Aorta (tissue), 5 donors: ENCODE measurements at regions of chr21 and their contacts with region 1.

Region 1: GRCh38 chr21:14382835-14383594 is at the start of gene HSPA13:
- DNase-seq: peak; percentile 100
- ATAC-seq: peak; percentile 100
- H3K4me3 ChIP-seq: peak within 1 kb of the TSS; percentile 69 to 71
- H3K27ac ChIP-seq: peak within 1 kb of the TSS; percentile 36 to 89
- H3K4me1 ChIP-seq: peaks cover 0 to 2% of the 10 kb centered on the region in 2 donors
- H3K27me3 ChIP-seq: no peaks in the 10 kb centered on the region
- total RNA-seq, gene HSPA13: 28.4 to 36.5 TPM

Region 2: DNA sequence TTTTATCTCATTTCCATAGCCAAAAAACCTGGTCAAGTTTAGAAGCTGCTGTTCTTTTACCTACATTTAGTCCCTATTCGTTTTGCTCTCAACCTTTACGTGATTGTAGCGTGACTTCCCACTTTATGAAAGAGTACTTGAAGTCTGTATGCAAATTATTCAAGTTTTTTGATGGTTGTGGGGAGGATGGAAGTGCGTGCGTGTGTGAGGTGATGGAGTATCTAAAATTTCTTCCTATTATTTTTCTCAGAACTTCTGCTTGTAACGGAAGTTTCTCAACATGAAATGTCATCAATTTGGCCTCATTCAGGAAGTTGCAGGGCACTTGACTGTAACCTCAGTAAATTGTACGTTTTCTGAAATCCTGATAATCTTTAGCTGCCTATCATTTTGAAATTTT is 99.2 kb after region 1 on chr21:
- intact Hi-C with region 1: no loop called
- DNase-seq: no peak
- ATAC-seq: no peak
- H3K4me3 ChIP-seq: no peak overlapping the region
- H3K27ac ChIP-seq: no peak overlapping the region
- H3K4me1 ChIP-seq: no peaks in the 10 kb centered on the region
- H3K27me3 ChIP-seq: no peaks in the 10 kb centered on the region

Region 3: DNA sequence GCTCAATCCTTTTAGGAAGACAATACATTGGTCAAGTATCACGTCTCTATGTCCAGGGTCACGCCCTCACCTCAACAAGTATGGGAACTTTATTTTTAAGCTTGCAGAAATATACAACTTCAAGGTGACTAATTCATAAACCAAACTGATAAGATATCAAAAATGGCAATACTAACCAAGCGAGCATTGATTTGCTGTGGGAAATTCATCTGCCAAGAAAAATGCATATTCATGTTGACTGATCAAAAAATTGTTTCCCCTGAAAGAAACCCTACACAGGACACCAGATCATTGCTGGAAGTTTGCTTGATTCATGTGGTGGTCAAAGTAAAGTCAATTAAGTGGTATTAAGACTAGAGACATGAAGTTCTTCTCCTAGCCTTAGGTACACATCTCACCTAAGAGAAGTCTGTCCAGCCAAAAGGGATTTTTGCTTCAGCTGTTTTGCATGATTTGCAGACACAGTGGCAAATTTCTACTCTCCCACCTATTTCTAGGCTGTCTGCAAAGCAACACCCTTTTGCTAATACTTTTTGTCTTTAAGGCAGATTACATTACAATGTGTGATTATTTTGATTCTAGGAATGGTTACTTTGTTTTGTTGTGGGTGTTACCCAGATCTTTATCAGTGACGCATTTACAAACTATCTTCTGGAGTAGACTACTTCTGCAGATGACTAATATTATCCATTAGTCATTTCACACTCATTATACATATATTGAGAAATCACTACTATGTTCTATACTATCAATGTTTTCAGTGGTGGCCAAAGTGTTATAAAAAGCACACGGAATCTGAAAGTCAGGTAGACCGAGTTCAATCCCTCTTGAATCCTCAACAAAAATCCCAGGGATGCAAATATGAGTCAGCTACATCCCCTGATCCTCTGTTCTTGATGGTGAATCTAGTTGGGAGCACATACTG is 150.8 kb after region 1 on chr21:
- intact Hi-C with region 1: no loop called
- DNase-seq: no peak
- ATAC-seq: no peak
- H3K4me3 ChIP-seq: no peak overlapping the region
- H3K27ac ChIP-seq: no peak overlapping the region
- H3K4me1 ChIP-seq: no peaks in the 10 kb centered on the region
- H3K27me3 ChIP-seq: no peaks in the 10 kb centered on the region

Region 4: GRCh38 chr21:14889996-14890540 is 507.1 kb after region 1 on chr21:
- intact Hi-C with region 1: no loop called
- DNase-seq: no peak
- ATAC-seq: no peak
- H3K4me3 ChIP-seq: no peak overlapping the region
- H3K27ac ChIP-seq: no peak overlapping the region
- H3K4me1 ChIP-seq: no peaks in the 10 kb centered on the region
- H3K27me3 ChIP-seq: no peaks in the 10 kb centered on the region

Region 5: GRCh38 chr21:15134701-15135470 is 751.9 kb after region 1 on chr21:
- intact Hi-C with region 1: loop called in 1 of 2 experiments (anchors 5 kb)
- DNase-seq: peak in 1 of 2 donors; percentile 46
- ATAC-seq: no peak
- H3K4me3 ChIP-seq: no peak overlapping the region
- H3K27ac ChIP-seq: no peak overlapping the region
- H3K4me1 ChIP-seq: peaks cover 0 to 2% of the 10 kb centered on the region in 2 donors
- H3K27me3 ChIP-seq: no peaks in the 10 kb centered on the region